HepG2 (cell line): ENCODE measurements at regions of chr1 and their contacts with region 1.

Region 1: DNA sequence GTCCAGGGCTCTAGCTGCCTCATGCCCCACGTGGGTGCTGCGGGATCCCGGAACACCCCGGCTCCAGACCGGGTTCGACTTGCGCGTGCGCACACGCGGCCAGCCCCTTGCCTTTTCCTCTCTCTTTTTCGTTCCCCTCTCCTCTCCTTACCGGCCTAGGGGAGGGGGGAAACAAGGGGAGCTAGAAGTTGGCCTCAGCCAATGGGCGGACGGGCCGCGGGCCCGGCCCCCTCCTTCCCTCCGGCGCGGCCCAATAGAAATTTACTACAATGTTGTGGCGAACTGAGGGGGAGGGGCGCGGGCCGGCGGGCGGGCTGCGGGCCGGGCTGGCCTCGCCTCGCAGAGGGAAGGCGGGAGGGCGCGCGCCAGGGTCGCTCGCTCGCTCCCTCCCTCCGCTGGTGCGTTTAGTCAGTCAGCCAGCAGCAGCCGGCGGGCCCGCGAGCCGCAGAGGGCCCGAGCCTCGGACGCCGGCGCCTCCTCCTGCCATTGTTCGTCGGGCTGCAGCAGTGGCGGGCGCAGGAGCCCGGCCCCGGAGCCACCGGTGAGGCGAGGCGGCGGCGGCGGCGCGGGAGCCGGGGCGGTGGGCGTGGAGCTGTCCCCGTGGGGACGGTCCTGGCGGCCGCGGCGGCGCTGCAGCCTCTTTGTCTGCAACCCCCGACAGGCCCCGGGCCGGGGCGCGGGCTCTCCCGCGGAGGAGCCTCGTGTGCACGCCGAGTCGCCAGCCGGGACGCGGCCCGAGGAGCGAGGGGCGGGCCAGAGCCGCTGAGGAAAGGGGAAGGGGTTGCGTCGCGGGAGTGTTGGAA is at the start of gene EPB41:
- DNase-seq: peak; percentile 94
- ATAC-seq: peak; percentile 95
- H3K4me3 ChIP-seq: peak within 1 kb of the TSS; percentile 46 to 81 (median 73)
- H3K27ac ChIP-seq: peak within 1 kb of the TSS; percentile 66
- H3K4me1 ChIP-seq: peaks cover 43% of the 10 kb centered on the region
- H3K27me3 ChIP-seq: no peaks in the 10 kb centered on the region; a peak in 1 of 5 replicates
- CTCF ChIP-seq: 0 out of 2 replicates have a peak, but pooled peaks have one; percentile 3
- EP300 ChIP-seq: no peak
- POLR2A ChIP-seq: peak in 1 of 2 experiments; percentile 69; a peak in 2 of 4 replicates
- RAD21 ChIP-seq: peak; percentile 35
- total RNA-seq, gene EPB41: 34.5 and 51.4 TPM in 2 replicates

Region 2: DNA sequence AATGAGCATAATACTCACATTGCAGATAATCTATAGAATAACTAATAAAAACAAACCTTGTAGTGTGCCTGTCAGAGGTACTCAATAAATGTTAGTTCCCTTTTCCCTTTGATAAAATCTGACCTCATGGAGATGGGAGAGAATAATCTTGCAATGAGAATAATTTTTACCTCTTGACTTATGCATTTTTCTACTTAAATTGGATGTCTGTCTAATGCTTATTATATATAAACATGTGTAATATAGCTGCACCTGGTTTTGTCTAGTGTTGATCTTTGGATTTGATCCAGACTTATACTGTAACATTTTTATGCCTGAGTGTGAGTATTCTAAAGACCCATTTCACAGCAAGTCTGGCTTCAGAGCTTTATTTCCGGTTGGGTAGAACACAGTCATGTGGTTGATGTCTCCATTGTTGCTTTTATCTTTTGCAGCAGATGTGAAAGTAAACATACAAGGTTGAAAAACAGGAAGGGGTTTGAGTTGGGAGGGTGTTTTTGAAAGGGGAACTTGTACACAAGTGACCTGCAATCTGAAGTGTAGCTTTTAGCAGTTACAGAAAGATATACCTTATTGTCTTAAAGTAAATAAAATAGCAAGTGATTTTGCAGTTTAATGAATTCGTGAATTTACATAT is 12.3 kb after region 1 on chr1:
- CTCF ChIA-PET with region 1: no interaction called
- POLR2A ChIA-PET with region 1: interaction called, 19 read pairs
- in situ Hi-C with region 1: no loop called
- intact Hi-C with region 1: no loop called
- DNase-seq: peak; percentile 80
- ATAC-seq: peak; percentile 53; the same call in 2 of the 3 replicates
- H3K4me3 ChIP-seq: no peak overlapping the region; a peak in 1 of 6 replicates
- H3K27ac ChIP-seq: peak overlapping the region; percentile 38
- H3K4me1 ChIP-seq: peaks cover 37% of the 10 kb centered on the region
- H3K27me3 ChIP-seq: no peaks in the 10 kb centered on the region
- CTCF ChIP-seq: no peak
- EP300 ChIP-seq: peak in 1 of 2 experiments; percentile 80; a peak in 2 of 4 replicates
- POLR2A ChIP-seq: no peak
- RAD21 ChIP-seq: no peak

Region 3: GRCh38 chr1:28983509-28984310 is 69.3 kb after region 1 on chr1:
- CTCF ChIA-PET with region 1: no interaction called
- POLR2A ChIA-PET with region 1: interaction called, 15 read pairs
- in situ Hi-C with region 1: no loop called
- intact Hi-C with region 1: no loop called
- DNase-seq: peak; percentile 79
- ATAC-seq: peak; percentile 97
- H3K4me3 ChIP-seq: peak overlapping the region; percentile 1 to 33 (median 29); a peak in 4 of 6 replicates
- H3K27ac ChIP-seq: peak overlapping the region; percentile 22
- H3K4me1 ChIP-seq: peaks cover 27% of the 10 kb centered on the region
- H3K27me3 ChIP-seq: no peaks in the 10 kb centered on the region
- CTCF ChIP-seq: peak; percentile 81
- EP300 ChIP-seq: 0 out of 4 replicates have a peak, but pooled peaks of 1 of the 2 experiments have one; percentile 14
- POLR2A ChIP-seq: no peak
- RAD21 ChIP-seq: peak; percentile 31; the same call in 1 of the 2 replicates